ENCODE measurements at regions of chr16 and their contacts with region 1.

Region 1: DNA sequence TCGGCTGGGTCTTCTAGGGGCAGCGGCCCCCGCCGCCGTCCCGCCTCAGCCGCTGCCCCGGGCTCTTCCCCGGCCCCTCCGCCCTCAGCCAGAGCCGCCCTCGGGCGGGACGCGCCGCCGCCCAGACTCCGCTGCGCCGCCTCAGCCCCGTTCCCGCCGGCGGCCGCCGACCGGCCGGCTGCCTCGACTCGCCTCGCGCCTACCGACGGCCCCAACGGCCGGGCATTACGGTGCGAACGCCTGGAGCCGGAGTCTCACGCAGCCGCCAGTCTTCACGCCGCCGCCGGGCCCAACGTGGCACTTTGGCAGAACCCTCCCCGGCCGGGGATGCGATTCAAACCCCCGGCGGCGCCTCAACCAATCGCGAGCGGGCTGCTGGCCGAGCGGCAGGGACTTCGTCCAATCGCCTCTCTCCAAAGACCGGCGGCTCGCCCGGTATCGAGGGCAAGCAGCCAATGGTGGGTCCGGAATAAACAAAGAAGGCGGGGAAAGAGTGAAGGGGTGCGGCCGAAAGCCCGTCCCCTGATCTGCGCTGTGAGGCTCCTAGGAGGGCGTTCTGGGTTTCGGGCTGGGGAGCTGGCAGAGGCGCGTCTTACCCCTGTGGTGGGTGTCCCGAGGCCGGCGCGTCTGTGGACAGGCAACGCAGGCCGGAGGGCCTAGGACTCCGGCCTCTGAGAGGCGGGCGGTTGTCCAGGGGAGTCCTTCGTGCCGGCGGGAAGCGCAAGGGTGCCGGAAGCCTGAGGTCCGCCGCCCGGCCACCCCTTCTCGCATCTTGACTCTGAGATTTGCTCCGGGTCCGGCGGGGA is at the start of gene CDR2:
- DNase-seq: peak; percentile 98
- ATAC-seq: peak; percentile 94
- H3K4me3 Mint-ChIP-seq: peak within 1 kb of the TSS; percentile 98
- H3K27ac Mint-ChIP-seq: peak within 1 kb of the TSS; percentile 93
- H3K4me1 Mint-ChIP-seq: peaks cover 38% of the 10 kb centered on the region
- H3K27me3 Mint-ChIP-seq: no peaks in the 10 kb centered on the region
- CTCF ChIP-seq: no peak
- total RNA-seq, gene CDR2: 34.7 to 37.6 TPM

Region 2: GRCh38 chr16:22318690-22319358 is 55.7 kb before region 1 on chr16:
- CTCF ChIA-PET with region 1: interaction called, 12 read pairs
- POLR2A ChIA-PET with region 1: interaction called, 4 read pairs
- intact Hi-C with region 1: no loop called
- DNase-seq: peak; percentile 63
- ATAC-seq: peak; percentile 49
- H3K4me3 Mint-ChIP-seq: no peak overlapping the region
- H3K27ac Mint-ChIP-seq: no peak overlapping the region
- H3K4me1 Mint-ChIP-seq: peaks cover 3% of the 10 kb centered on the region
- H3K27me3 Mint-ChIP-seq: no peaks in the 10 kb centered on the region
- CTCF ChIP-seq: peak; percentile 79

Region 3: GRCh38 chr16:22353191-22353919 is 21.2 kb before region 1 on chr16:
- CTCF ChIA-PET with region 1: interaction called, 12 read pairs
- POLR2A ChIA-PET with region 1: interaction called, 152 read pairs
- intact Hi-C with region 1: no loop called
- DNase-seq: peak; percentile 27
- ATAC-seq: peak; percentile 67
- H3K4me3 Mint-ChIP-seq: peak overlapping the region; percentile 46
- H3K27ac Mint-ChIP-seq: peak overlapping the region; percentile 97
- H3K4me1 Mint-ChIP-seq: peaks cover 58% of the 10 kb centered on the region
- H3K27me3 Mint-ChIP-seq: no peaks in the 10 kb centered on the region
- CTCF ChIP-seq: no peak

Region 4: GRCh38 chr16:22360963-22361659 is 13.4 kb before region 1 on chr16:
- CTCF ChIA-PET with region 1: interaction called, 12 read pairs
- POLR2A ChIA-PET with region 1: interaction called, 152 read pairs
- intact Hi-C with region 1: no loop called
- DNase-seq: peak; percentile 44
- ATAC-seq: peak; percentile 29
- H3K4me3 Mint-ChIP-seq: no peak overlapping the region
- H3K27ac Mint-ChIP-seq: peak overlapping the region; percentile 91
- H3K4me1 Mint-ChIP-seq: peaks cover 71% of the 10 kb centered on the region
- H3K27me3 Mint-ChIP-seq: no peaks in the 10 kb centered on the region
- CTCF ChIP-seq: no peak

Region 5: DNA sequence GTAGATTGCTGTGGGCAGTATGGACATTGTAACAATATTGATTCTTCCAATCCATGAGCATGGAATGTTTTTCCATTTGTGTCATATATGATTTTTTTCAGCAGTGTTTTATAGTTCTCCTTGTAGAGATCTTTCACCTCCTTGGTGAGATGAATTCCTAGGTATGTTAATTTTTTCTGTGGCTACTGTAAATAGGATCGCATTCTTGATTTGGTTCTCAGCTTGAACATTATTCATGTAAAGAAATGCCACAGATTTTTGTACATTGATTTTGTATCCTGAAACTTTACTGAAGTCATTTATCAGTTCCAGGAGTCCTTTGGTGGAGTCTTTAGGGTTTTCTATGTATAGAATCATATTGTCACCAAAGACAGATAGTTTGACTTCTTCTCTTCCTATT is 19.6 kb after region 1 on chr16:
- CTCF ChIA-PET with region 1: no interaction called
- POLR2A ChIA-PET with region 1: no interaction called
- intact Hi-C with region 1: no loop called
- DNase-seq: no peak
- ATAC-seq: no peak
- H3K4me3 Mint-ChIP-seq: no peak overlapping the region
- H3K27ac Mint-ChIP-seq: no peak overlapping the region
- H3K4me1 Mint-ChIP-seq: no peaks in the 10 kb centered on the region
- H3K27me3 Mint-ChIP-seq: no peaks in the 10 kb centered on the region
- CTCF ChIP-seq: no peak

Measured in activated CD8-positive, alpha-beta T cell treated with anti-CD3 and anti-CD28 coated beads for 36 hours (primary cell).